Thyroid gland (tissue), 4 donors: ENCODE measurements at regions of chr5 and their contacts with region 1.

Region 1: DNA sequence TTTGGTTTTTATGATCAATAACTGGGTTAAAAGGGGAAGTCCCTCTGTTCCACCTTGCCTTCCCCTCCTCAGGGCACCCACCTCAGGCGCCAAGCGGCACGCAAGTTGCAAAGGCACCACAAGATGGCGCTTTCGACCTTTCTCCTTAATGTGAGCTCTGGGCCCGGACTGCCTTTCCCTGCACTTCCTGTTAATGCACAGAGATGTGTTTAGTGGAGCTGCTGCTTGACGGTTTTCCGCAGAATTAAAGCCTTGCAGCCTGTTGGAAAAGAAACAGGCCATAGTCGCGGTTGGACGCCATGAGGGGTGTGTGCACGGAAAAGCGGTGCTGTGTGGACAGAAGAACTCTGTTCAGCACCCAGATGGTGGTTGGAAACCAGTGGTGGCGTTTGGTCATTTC is 17.9 kb downstream of the CXCL14 start:
- DNase-seq: peak; percentile 73 to 78
- H3K4me3 ChIP-seq: no peak overlapping the region
- H3K27ac ChIP-seq: no peak overlapping the region
- H3K4me1 ChIP-seq: no peaks in the 10 kb centered on the region
- H3K27me3 ChIP-seq: no peaks in the 10 kb centered on the region
- CTCF ChIP-seq: peak; percentile 40 to 85 (median 63)
- POLR2A ChIP-seq: no peak

Region 2: DNA sequence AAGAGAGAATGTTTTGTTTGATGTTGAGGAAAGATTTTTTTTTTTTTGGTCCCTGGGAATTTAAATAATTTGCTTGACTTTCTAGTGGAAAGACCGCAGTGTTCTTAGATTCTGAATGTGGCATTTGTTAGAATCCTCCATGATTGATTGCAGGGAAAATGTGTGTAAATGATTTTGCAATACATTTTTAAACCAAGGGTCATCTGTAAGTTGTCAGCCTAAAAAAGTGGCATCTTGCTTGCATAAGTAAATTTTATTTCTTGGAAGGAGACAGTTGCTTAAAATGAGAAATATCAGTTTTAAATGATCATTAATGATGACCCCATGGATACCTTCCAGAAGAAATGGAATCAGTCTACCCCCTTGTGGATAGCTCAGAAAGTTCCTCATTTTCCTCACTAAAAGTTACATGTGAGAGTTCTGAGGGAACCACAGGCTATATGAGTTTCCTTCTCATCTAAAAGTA is 168.5 kb after region 1 on chr5:
- intact Hi-C with region 1: loop called (anchors 5 kb)
- DNase-seq: no peak
- H3K4me3 ChIP-seq: no peak overlapping the region
- H3K27ac ChIP-seq: no peak overlapping the region
- H3K4me1 ChIP-seq: peaks cover 4 to 8% of the 10 kb centered on the region in 2 donors
- H3K27me3 ChIP-seq: no peaks in the 10 kb centered on the region
- CTCF ChIP-seq: peak in 3 of 6 experiments; percentile 20 to 45 (median 27)
- POLR2A ChIP-seq: no peak